Aorta (tissue), 5 donors: ENCODE measurements at regions of chr3 and their contacts with region 1.

Region 1: DNA sequence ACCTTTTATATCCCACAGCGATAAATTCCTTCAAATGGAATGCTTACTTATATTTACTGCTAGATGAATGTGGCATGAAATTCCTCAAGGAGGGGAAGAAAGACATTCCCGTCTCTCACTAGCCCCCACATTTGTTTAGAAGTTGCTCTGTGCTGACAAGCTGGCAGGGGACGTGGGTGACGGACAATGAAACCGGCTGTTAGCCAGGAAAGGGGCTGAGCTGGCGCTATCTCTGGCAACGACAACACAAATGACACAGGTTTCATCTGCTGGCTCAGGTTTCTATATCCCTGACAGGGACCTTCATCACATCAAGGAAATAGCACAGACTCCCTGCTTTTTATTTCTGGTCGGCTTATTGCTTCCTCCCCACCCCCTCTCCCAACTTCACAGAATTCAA is 15.8 kb downstream of the RUVBL1 start:
- DNase-seq: no peak
- ATAC-seq: no peak
- H3K4me3 ChIP-seq: no peak overlapping the region
- H3K27ac ChIP-seq: no peak overlapping the region
- H3K4me1 ChIP-seq: no peaks in the 10 kb centered on the region
- H3K27me3 ChIP-seq: no peaks in the 10 kb centered on the region

Region 2: GRCh38 chr3:128051837-128052594 is 55.8 kb before region 1 on chr3 and contains the start of gene SEC61A1:
- intact Hi-C with region 1: no loop called
- DNase-seq: peak; percentile 97 to 98
- ATAC-seq: peak; percentile 98
- H3K4me3 ChIP-seq: peak within 1 kb of the TSS; percentile 62 to 99
- H3K27ac ChIP-seq: peak within 1 kb of the TSS; percentile 74 to 91
- H3K4me1 ChIP-seq: peaks cover 3 to 16% of the 10 kb centered on the region in 2 donors
- H3K27me3 ChIP-seq: no peaks in the 10 kb centered on the region
- total RNA-seq, gene SEC61A1: 156 to 172 TPM

Region 3: GRCh38 chr3:128133273-128134084 is 25.6 kb after region 1 on chr3:
- intact Hi-C with region 1: loop called in 1 of 2 experiments (anchors 2 kb)
- DNase-seq: no peak
- ATAC-seq: no peak
- H3K4me3 ChIP-seq: no peak overlapping the region
- H3K27ac ChIP-seq: no peak overlapping the region
- H3K4me1 ChIP-seq: no peaks in the 10 kb centered on the region
- H3K27me3 ChIP-seq: no peaks in the 10 kb centered on the region